Left colon (tissue), 2 donors: ENCODE measurements at regions of chr6 and their contacts with region 1.

Region 1: DNA sequence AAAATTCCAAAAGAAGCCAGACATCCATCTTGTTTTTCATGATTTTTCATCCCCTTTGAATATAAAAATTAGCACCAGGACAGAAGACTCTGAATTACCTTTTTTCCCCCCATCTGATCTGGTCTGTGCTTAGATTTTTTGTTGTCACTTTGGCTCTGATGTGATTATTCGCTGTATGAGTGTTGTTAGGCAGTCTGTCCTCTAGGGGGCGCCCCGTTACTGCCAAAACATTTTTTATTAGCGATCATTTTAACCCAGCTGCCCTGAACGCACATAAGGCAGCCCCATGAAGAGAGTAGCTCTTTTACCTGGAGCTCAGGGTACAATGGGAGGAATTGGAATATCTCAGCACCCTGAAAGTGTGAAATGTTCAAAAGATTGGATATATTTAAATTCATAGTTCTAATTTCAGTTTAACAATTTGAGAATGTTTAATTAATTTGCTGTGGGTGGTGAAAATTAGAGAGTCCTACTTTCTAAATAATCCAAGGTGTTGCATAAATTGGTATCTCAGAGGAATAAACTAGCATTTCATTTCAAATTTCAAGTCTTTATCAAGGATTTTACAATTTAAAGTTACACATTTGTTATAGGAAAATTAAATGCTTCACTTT is 60.8 kb downstream of the PRPH2 start:
- DNase-seq: peak; percentile 55 to 79
- ATAC-seq: peak; percentile 88

Region 2: GRCh38 chr6:42440778-42441696 is 220.6 kb before region 1 on chr6:
- intact Hi-C with region 1: no loop called
- DNase-seq: no peak
- ATAC-seq: no peak

Region 3: GRCh38 chr6:42726485-42727086 is 64.9 kb after region 1 on chr6:
- intact Hi-C with region 1: loop called in 1 of 2 experiments (anchors 5 kb)
- DNase-seq: peak; percentile 73 to 84
- ATAC-seq: peak; percentile 94

Region 4: DNA sequence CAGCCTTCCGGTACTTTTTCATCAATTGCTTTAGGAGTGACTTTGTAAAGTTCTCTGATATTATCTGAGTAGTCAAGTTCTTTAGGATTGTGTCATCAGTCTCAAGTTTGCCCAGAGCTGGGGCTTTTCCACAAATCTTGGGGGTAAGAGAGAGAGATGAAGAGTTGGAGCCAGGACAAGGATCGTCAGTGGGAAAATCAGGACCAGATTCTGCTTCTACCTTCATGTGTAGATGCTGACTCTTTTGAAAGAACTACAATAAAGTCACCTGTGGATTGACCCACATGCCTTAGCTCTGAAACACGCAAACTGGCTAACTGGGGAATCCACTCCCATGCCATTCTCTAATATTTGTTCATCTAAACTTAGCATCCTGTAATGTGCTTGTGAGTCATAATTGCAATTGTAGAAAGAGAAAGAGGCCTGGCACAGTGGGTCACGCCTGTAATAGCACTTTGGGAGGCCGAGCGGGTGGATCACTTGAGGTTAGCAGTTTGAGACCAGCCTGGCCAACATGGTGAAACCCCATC is 104.6 kb after region 1 on chr6:
- intact Hi-C with region 1: no loop called
- DNase-seq: no peak
- ATAC-seq: peak; percentile 9

Region 5: GRCh38 chr6:42879372-42880239 is 218.0 kb after region 1 on chr6 and contains the start of gene RPL7L1:
- intact Hi-C with region 1: loop called in 1 of 2 experiments (anchors 5 kb)
- DNase-seq: peak; percentile 85 to 86
- ATAC-seq: peak; percentile 94
- total RNA-seq, gene RPL7L1: 43.7 to 50.4 TPM